ENCODE measurements at regions of chr9 and their contacts with region 1.

Region 1: GRCh38 chr9:109923471-109923760 is 143.4 kb downstream of the PALM2AKAP2 start:
- DNase-seq: no peak

Region 2: DNA sequence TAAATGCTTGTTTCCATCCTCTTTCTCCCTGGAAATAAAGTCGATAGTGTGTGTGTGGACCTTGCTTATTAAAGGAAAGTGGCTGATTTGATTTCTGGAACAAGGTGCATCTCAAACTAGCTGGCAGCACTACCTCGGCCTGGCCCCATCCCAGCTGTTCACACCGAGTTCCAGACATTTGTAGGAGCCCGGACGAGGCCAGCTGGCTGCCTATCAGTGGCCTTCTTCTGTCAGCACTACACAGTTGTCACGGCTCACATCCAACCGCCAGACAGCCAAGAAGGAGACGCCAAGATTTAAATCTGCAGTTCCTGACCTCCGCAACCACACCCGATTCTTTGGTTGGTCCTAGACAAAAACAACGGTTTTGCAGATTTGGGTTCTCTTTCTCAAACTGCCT is 79.8 kb before region 1 on chr9:
- intact Hi-C with region 1: no loop called
- DNase-seq: peak; percentile 91

Region 3: GRCh38 chr9:109934857-109935215 is 11.4 kb after region 1 on chr9:
- intact Hi-C with region 1: no loop called
- DNase-seq: no peak

Region 4: GRCh38 chr9:109956717-109957440 is 33.5 kb after region 1 on chr9:
- intact Hi-C with region 1: loop called (anchors 5 kb)
- DNase-seq: no peak

Measured in cardiac septum (tissue), 1 donor.